Caco-2 (cell line): ENCODE measurements at regions of chr1 and their contacts with region 1.

Region 1: DNA sequence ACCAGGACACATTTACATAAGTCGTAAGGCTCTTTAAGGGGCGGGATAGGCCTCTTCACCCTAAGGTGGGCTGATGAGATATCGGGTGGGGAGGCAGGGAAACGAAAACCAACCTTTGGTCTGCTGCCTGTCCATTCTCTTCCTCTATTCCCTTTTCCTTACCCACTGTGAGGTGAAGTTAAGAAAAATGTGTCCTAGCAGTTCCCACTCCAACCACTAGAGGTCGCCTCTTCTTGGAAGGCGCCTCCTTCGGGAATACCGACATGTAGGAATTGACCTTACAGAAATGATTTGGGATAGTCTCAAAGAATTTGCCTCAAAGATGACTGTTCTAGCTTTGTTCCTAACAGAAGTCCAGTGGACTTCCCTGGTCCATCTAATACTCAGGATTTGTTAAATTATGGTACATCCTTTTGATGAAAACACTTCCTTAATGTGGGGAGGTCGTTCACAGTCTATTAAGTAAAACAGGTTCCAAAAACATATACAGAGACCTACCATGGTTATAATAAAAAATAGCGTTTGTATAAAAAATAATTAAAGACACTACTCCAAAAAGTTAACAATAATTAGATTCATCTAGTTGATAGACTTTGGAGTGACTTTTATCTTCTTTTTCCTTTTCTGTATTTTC is 14.1 kb downstream of the AZIN2 start:
- DNase-seq: peak in 1 of 2 experiments; percentile 63
- H3K4me3 ChIP-seq: no peak overlapping the region
- H3K4me3 Mint-ChIP-seq: no peak overlapping the region
- H3K27ac Mint-ChIP-seq: no peak overlapping the region
- H3K4me1 ChIP-seq: no peaks in the 10 kb centered on the region
- H3K4me1 Mint-ChIP-seq: no peaks in the 10 kb centered on the region
- H3K27me3 ChIP-seq: no peaks in the 10 kb centered on the region; the same call in 1 of the 2 replicates
- H3K27me3 Mint-ChIP-seq: no peaks in the 10 kb centered on the region
- CTCF ChIP-seq: peak; percentile 71 to 87

Region 2: DNA sequence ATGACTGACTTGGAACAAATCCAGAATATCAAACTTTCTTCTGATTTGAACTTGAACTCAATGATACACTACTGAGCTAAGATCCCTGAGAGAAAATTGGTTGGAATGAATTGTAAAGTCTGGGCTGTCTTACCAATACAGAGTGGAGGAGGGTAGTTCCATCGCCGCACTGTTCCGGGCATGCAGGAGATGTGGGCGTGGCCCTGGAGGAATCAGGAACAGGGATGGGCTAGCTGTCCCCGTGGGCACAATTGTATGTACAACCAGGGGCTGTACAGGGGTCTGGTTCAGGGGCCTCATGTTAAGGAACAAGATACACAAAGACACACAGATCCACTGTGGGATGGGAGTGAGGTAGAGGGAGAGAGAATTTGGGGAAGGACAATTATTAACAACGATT is 521.7 kb after region 1 on chr1:
- CTCF ChIA-PET with region 1: no interaction called
- POLR2A ChIA-PET with region 1: no interaction called
- intact Hi-C with region 1: loop called (anchors 10 kb)
- DNase-seq: no peak
- H3K4me3 ChIP-seq: no peak overlapping the region
- H3K4me3 Mint-ChIP-seq: no peak overlapping the region
- H3K27ac Mint-ChIP-seq: no peak overlapping the region
- H3K4me1 ChIP-seq: no peaks in the 10 kb centered on the region
- H3K4me1 Mint-ChIP-seq: no peaks in the 10 kb centered on the region
- H3K27me3 ChIP-seq: no peaks in the 10 kb centered on the region
- H3K27me3 Mint-ChIP-seq: peaks cover 27% of the 10 kb centered on the region
- CTCF ChIP-seq: no peak